ENCODE measurements at regions of chr14 and their contacts with region 1.

Region 1: DNA sequence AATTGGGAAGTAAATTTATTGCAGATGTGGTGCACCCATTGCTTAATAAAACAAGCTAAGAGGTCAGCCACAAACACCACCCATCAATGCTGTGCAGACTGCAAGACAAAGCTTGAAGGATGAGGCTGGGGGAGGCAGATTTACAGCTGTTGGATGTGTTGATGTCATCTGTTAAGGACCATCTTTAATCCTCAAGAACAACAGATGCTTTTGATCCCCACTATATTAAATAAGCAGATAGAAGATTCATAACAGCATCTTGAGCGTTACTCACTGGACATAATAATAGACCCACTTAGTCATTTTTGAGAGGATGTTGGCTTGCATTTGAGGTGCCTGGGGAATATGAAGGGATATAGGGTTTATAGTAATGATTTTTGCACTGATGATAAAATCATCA is 58.8 kb downstream of the GPR68 start:
- DNase-seq: no peak
- H3K4me3 ChIP-seq: no peak overlapping the region
- H3K27ac ChIP-seq: no peak overlapping the region
- H3K4me1 ChIP-seq: no peaks in the 10 kb centered on the region
- H3K27me3 ChIP-seq: no peaks in the 10 kb centered on the region
- CTCF ChIP-seq: no peak

Region 2: GRCh38 chr14:91272341-91273272 is 86.9 kb after region 1 on chr14:
- intact Hi-C with region 1: loop called (anchors 5 kb)
- DNase-seq: no peak
- H3K4me3 ChIP-seq: no peak overlapping the region
- H3K27ac ChIP-seq: no peak overlapping the region
- H3K4me1 ChIP-seq: peaks cover 0 to 11% (median 8%) of the 10 kb centered on the region in 4 donors
- H3K27me3 ChIP-seq: peaks cover 0 to under 1% of the 10 kb centered on the region in 2 donors
- CTCF ChIP-seq: no peak

Region 3: GRCh38 chr14:91286530-91286937 is 100.8 kb after region 1 on chr14:
- intact Hi-C with region 1: loop called (anchors 5 kb)
- DNase-seq: peak; percentile 78 to 80
- H3K4me3 ChIP-seq: no peak overlapping the region
- H3K27ac ChIP-seq: no peak overlapping the region
- H3K4me1 ChIP-seq: peaks cover 0 to 21% (median 10%) of the 10 kb centered on the region in 4 donors
- H3K27me3 ChIP-seq: no peaks in the 10 kb centered on the region
- CTCF ChIP-seq: peak; percentile 84